ENCODE measurements at regions of chr18 and their contacts with region 1.

Region 1: DNA sequence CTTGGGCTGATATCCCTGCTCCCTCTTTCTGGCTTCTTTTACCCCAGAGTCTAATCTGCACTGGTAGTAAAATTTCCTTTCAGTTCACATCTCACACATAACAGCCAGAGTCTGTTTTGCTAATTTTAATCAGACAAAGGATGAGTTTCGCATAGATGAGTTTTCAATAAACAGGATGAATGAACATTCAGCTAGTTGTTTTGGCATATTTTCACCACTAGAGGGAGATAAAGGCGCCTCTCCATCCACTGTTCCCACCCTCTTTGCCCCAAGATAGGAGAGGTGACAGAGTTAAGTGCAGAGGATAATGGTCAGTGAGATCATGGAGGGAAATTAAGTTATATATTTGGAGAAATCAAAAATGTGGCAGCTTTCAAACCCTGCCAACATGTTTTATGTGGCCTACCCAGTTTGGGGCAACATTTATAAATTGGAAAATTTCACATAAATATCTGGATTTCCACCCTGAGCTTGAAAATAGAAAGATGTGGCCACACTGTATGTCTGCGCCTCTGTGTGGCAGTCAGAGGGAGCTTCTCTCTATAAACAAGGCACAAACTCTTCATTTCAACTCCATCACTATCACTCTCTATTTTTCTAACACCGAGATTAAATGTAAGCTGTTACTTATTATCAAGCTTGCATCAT is 48.5 kb upstream of the DTNA start:
- DNase-seq: peak; percentile 51
- ATAC-seq: peak; percentile 83
- H3K4me3 ChIP-seq: no peak overlapping the region
- H3K27ac ChIP-seq: no peak overlapping the region
- H3K4me1 ChIP-seq: peaks cover 2% of the 10 kb centered on the region
- H3K27me3 ChIP-seq: no peaks in the 10 kb centered on the region
- CTCF ChIP-seq: peak; percentile 81
- POLR2A ChIP-seq: no peak
- RAD21 ChIP-seq: peak; percentile 81

Region 2: GRCh38 chr18:34122724-34123334 is 538.8 kb before region 1 on chr18:
- CTCF ChIA-PET with region 1: no interaction called
- POLR2A ChIA-PET with region 1: no interaction called
- dilution Hi-C with region 1: no loop called
- in situ Hi-C with region 1: no loop called
- intact Hi-C with region 1: loop called (anchors 5 kb)
- DNase-seq: peak; percentile 53
- ATAC-seq: peak; percentile 69; the same call in 1 of the 2 replicates
- H3K4me3 ChIP-seq: no peak overlapping the region
- H3K27ac ChIP-seq: no peak overlapping the region
- H3K4me1 ChIP-seq: no peaks in the 10 kb centered on the region
- H3K27me3 ChIP-seq: no peaks in the 10 kb centered on the region
- CTCF ChIP-seq: peak; percentile 98
- POLR2A ChIP-seq: no peak
- RAD21 ChIP-seq: peak; percentile 62

Region 3: GRCh38 chr18:34647251-34647650 is 14.3 kb before region 1 on chr18:
- CTCF ChIA-PET with region 1: interaction called, 10 read pairs
- POLR2A ChIA-PET with region 1: no interaction called
- dilution Hi-C with region 1: no loop called
- in situ Hi-C with region 1: no loop called
- intact Hi-C with region 1: no loop called
- DNase-seq: no peak
- ATAC-seq: no peak
- H3K4me3 ChIP-seq: no peak overlapping the region
- H3K27ac ChIP-seq: no peak overlapping the region
- H3K4me1 ChIP-seq: peaks cover 4% of the 10 kb centered on the region; the same call in 1 of the 2 replicates
- H3K27me3 ChIP-seq: no peaks in the 10 kb centered on the region
- CTCF ChIP-seq: no peak
- POLR2A ChIP-seq: no peak
- RAD21 ChIP-seq: no peak

Region 4: GRCh38 chr18:34691614-34692013 is 30.0 kb after region 1 on chr18:
- CTCF ChIA-PET with region 1: interaction called, 4 read pairs
- POLR2A ChIA-PET with region 1: no interaction called
- dilution Hi-C with region 1: no loop called
- in situ Hi-C with region 1: no loop called
- intact Hi-C with region 1: loop called (anchors 1 kb)
- DNase-seq: no peak
- ATAC-seq: no peak
- H3K4me3 ChIP-seq: no peak overlapping the region
- H3K27ac ChIP-seq: no peak overlapping the region
- H3K4me1 ChIP-seq: peaks cover 2% of the 10 kb centered on the region; the same call in 1 of the 2 replicates
- H3K27me3 ChIP-seq: no peaks in the 10 kb centered on the region
- CTCF ChIP-seq: no peak
- POLR2A ChIP-seq: no peak
- RAD21 ChIP-seq: no peak

Region 5: DNA sequence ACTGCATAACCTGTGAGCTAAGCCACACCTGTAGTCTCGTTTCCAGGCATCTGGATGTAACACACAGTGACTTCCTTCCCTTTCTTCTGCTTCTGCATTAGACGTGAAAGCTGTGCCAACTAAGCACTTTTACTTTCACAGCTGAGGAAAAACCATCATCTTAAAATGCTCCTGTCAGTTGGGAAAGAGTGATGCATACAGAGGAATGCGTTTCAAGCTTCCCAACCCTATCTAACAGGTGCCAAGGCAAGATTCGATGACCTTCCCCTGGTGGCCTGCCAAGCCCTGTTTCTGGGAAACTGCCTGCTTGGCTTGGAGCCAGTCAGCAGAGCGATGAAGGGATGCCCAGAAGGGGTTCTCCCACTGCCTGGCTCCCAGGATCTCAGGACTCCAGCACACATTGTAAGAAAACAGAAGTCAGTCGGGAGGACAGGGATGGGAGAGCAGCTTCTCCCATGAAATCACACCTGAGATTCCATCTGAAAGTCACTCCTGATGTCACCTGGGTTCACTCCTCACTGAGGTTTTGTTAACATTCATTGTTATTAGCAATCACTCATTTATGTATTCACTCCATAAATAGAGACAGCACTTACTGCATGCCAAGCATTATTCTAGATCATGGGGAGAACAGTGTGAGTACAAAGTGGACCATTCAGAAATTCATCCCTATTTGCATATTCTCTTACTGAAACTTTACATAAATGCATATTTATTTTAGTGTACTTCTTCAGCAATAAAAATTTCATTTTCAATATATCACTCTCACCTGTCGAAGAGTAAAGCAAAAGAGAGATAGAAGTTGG is 112.6 kb after region 1 on chr18:
- CTCF ChIA-PET with region 1: interaction called, 6 read pairs
- POLR2A ChIA-PET with region 1: no interaction called
- dilution Hi-C with region 1: no loop called
- in situ Hi-C with region 1: loop called (anchors 5 kb)
- intact Hi-C with region 1: no loop called
- DNase-seq: peak; percentile 64
- ATAC-seq: no peak
- H3K4me3 ChIP-seq: no peak overlapping the region
- H3K27ac ChIP-seq: no peak overlapping the region
- H3K4me1 ChIP-seq: peaks cover 12% of the 10 kb centered on the region
- H3K27me3 ChIP-seq: no peaks in the 10 kb centered on the region
- CTCF ChIP-seq: no peak
- POLR2A ChIP-seq: no peak
- RAD21 ChIP-seq: no peak

Region 6: DNA sequence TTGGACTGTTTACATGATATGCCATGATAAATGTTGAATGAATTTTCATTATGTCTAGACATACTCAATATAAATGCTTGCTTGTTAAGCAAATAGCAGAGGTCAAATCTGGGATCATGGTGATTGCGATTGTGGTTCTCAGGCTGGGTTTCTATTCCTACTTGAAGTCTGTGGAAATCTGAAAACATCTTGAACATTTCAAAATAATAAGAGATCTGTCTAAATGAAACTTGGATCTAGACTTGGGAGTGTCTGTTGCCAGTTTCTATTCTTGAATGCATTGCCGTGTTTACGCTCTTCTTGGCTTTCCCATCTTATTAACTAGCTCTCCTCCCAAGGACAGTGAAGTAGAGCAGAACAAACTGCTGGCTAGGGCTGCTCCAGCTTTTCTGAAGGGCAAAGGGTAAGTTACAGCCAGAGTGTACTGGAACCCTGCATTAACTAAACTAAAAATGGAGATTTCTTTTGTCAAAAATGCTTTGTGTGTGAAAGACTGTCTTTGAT is 176.2 kb after region 1 on chr18:
- CTCF ChIA-PET with region 1: no interaction called
- POLR2A ChIA-PET with region 1: no interaction called
- dilution Hi-C with region 1: no loop called
- in situ Hi-C with region 1: no loop called
- intact Hi-C with region 1: no loop called
- DNase-seq: peak; percentile 12
- ATAC-seq: 0 out of 2 replicates have a peak, but pooled peaks have one; percentile 24
- H3K4me3 ChIP-seq: no peak overlapping the region
- H3K27ac ChIP-seq: no peak overlapping the region
- H3K4me1 ChIP-seq: no peaks in the 10 kb centered on the region
- H3K27me3 ChIP-seq: no peaks in the 10 kb centered on the region
- CTCF ChIP-seq: no peak
- POLR2A ChIP-seq: no peak
- RAD21 ChIP-seq: no peak